ENCODE measurements at regions of chr17 and their contacts with region 1.

Region 1: GRCh38 chr17:752002-752619 is at the start of gene GEMIN4:
- DNase-seq: peak; percentile 97
- H3K4me3 ChIP-seq: peak within 1 kb of the TSS; percentile 75 to 85 (median 80)
- H3K27ac ChIP-seq: peak within 1 kb of the TSS; percentile 80 to 92 (median 86)
- H3K4me1 ChIP-seq: peaks cover 14 to 38% (median 24%) of the 10 kb centered on the region in 4 donors
- H3K27me3 ChIP-seq: no peaks in the 10 kb centered on the region
- CTCF ChIP-seq: peak in 2 of 3 experiments; percentile 95 to 97
- EP300 ChIP-seq: no peak
- POLR2A ChIP-seq: peak; percentile 62
- total RNA-seq, gene GEMIN4: 15.4 to 21.2 (median 19.0) TPM

Region 2: DNA sequence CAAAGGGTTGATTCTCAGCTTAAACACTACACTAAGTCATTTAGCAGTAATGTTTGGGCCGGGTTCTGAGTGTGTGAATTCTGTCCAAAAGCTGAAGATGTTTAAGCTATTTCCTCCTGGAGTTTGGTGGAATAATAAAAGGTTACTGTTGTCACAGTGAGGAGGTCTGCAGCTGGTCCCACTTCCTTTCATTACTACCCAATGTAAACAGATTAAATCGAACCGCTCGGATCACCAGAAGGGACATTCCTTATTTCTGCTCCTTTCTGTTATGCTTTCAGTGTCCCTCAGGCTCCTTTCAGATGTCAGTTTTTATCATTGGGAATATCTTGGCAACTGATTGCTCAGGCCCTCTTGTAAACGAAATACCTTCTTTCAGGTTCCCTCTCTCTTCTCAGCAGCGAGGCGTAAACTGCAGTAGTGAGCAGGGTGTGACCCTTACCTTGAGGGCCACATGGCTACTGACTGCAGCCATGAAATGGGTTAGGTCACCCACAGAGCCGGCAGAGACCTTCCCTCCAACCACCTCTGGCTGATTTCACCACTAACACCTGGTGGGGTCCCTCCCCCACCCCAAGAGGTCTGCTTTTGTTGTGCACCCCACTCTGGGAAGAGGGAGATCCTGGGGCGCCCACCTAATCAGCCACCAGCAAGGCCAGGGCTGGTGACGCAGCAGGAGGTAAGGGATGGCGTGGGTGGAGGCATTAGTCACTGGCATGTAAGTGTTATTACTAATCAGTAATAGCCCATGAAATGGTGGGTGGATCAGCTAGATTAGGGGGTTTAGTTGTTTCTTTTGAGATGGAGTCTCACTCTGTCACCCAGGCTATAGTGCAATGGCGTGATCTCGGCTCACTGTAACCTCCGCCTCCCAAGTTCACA is 155.1 kb before region 1 on chr17:
- intact Hi-C with region 1: no loop called
- DNase-seq: no peak
- H3K4me3 ChIP-seq: no peak overlapping the region
- H3K27ac ChIP-seq: no peak overlapping the region
- H3K4me1 ChIP-seq: peaks cover 13 to 21% (median 19%) of the 10 kb centered on the region in 4 donors
- H3K27me3 ChIP-seq: no peaks in the 10 kb centered on the region
- CTCF ChIP-seq: no peak
- EP300 ChIP-seq: no peak
- POLR2A ChIP-seq: no peak

Region 3: DNA sequence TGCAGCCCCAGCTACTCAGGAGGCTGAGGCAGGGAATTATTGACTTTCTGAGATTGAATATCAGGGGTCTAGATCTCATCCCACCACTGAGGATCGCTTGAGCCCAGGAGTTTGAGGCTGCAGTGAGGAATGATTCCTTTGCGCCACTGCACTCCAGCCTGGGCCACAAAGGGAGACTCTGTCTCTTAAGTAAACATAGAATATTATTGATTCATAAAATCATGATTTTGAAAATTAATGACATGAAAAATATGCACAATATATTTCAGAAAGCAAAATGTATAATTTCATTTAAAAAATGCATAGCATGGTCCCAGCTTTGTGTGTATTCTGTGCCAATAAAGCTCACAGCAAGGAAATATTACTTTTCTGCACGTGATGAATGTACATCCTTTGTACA is 35.9 kb before region 1 on chr17:
- intact Hi-C with region 1: loop called (anchors 5 kb)
- DNase-seq: no peak
- H3K4me3 ChIP-seq: no peak overlapping the region
- H3K27ac ChIP-seq: no peak overlapping the region
- H3K4me1 ChIP-seq: peaks cover 10 to 49% (median 36%) of the 10 kb centered on the region in 4 donors
- H3K27me3 ChIP-seq: no peaks in the 10 kb centered on the region
- CTCF ChIP-seq: no peak
- EP300 ChIP-seq: no peak
- POLR2A ChIP-seq: no peak

Region 4: DNA sequence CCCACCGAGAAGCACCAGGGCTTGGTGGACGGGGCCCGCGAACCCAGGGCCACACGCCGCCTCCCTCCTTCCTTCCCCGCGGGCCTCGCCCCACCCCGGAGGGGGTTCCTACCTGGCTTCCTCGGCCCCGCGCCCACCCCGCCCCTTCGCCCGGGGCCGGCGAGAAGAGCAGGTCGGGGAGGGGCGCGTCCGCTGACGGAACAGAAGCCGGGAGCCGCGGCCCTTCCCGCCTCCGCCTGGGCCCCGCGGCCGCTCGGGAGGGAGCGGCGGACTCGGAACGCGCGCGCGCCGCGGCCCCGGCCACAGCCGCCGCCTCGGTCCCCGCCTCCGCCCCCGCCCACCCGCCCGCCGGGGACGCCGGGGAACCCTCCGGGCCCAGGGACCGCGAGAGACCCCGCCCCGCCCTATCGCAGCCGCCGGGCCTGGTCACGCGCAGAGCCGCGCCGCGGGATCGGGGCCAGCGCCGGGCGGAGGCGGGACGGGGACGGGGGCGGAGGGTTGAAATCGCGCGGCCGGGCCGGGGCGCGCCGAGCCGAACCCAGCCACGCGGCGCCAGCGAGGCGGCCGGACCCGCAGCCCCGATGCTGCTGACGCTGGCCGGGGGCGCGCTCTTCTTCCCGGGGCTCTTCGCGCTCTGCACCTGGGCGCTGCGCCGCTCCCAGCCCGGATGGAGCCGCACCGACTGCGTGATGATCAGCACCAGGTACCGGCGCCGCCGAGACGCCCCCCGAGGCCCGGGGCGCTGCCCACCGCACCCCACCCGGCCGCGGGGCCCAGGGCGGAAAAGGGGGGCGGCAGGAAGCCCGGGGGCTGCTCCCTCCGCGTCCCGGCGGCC is 19.8 kb before region 1 on chr17 and contains the start of gene TLCD3A:
- intact Hi-C with region 1: loop called (anchors 2 kb)
- DNase-seq: no peak
- H3K4me3 ChIP-seq: peak within 1 kb of the TSS; percentile 82 to 89 (median 86)
- H3K27ac ChIP-seq: peak within 1 kb of the TSS; percentile 85 to 93 (median 89)
- H3K4me1 ChIP-seq: peaks cover 4 to 26% (median 21%) of the 10 kb centered on the region in 4 donors
- H3K27me3 ChIP-seq: no peaks in the 10 kb centered on the region
- CTCF ChIP-seq: no peak
- EP300 ChIP-seq: no peak
- POLR2A ChIP-seq: no peak
- total RNA-seq, gene TLCD3A: 2.1 to 10.8 (median 5.1) TPM

Region 5: DNA sequence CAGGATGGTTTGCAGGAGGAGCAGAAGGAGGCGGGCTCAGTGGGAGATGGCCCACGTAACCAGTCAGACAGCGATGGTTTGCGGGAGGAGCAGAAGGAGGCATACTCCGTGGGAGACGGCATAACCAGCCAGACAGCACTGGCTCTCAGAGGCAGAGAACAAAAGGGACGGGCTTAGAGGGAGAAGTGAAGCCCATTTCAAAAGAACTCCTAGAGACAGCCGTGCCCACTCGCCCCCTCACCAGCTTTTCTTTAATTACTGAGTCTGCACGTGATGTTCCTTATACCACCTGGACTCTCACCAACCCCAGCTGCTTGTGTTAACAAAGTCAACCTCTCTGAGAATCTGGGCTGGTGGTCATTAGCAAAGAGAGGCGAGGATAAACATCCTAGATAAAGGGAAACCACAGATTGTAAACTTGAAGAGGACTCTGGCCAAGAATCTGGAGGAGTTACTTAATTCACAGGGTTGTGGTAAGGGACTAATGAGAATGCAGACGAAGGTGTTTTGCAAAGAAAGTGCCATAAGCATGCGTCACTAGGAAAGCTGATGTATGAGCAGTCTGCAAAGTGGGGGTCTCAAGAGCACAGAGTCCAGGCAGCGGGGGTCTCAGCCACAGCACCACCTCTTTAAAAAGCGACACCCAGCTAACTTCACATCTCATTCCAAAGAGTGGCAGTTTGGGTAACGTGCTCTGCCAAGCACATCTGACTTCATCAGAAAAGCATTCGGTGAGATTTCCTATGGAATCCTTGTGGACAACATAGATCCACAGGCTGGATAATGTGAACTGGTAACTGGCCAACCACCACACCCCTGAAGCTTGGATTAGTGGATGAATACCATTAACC is 175.7 kb after region 1 on chr17:
- intact Hi-C with region 1: no loop called
- DNase-seq: no peak
- H3K4me3 ChIP-seq: peak overlapping the region in 2 of 4 donors; percentile 0 to 6
- H3K27ac ChIP-seq: peak overlapping the region; percentile 33 to 62 (median 53)
- H3K4me1 ChIP-seq: peaks cover 0 to 39% (median 23%) of the 10 kb centered on the region in 4 donors
- H3K27me3 ChIP-seq: no peaks in the 10 kb centered on the region
- CTCF ChIP-seq: no peak
- EP300 ChIP-seq: no peak
- POLR2A ChIP-seq: no peak

Measured in esophagus muscularis mucosa (tissue), 4 donors.